PC-3 (cell line): ENCODE measurements at regions of chr2 and their contacts with region 1.

Region 1: DNA sequence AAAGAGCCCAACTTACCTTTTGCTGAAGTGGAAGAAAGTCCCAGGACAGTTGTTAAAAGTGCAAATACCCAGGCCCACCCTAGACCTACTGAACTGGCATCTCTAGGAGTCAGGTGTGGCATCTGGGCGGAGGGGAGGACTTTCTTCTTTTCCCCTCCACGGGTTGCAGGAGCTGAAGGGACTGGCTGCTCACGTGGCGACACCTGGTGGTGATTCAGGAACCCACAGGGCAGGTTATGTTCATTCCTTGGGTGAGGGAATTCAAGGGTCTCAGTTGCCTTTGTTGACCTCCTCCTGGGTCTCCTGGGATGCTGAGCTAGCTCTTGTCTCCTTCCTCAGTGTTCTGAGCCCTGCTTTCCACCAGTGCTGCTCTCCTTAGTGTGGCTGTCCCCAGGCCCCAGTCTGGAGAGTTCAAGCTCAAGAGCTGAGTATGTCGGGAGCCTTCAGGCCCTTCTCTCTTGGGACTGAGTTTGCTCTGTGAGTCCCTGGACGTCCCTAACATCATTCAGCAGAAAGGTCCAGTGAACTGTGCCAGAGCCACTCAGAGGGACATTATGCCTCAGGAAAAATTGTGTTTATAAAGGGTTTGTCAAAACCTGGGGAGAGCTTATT is 56.9 kb downstream of the DYSF start:
- DNase-seq: peak; percentile 73
- ATAC-seq: peak; percentile 90
- H3K4me3 ChIP-seq: no peak overlapping the region
- H3K27ac ChIP-seq: no peak overlapping the region
- H3K4me1 ChIP-seq: no peaks in the 10 kb centered on the region
- H3K27me3 ChIP-seq: no peaks in the 10 kb centered on the region
- CTCF ChIP-seq: peak; percentile 95

Region 2: DNA sequence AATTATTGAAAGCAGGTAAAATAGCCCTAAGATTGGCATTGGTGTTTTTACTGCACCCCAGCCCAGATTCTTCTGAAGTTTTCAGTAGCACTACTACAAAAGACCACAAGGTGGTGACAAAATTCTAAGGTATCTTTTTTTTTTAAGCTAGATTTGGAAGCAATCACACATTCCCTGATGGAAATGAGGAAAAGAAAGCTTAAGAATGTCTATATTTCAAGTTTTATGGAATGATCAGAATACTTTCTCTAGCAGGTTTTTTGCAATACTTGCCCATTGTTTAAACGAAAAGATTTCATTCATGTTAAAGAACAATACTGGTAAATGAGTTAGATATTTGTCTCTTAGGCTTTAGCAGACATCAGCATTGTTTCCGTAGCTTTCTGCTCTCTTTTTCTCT is 210.8 kb before region 1 on chr2:
- CTCF ChIA-PET with region 1: interaction called, 23 read pairs
- POLR2A ChIA-PET with region 1: interaction called, 3 read pairs
- intact Hi-C with region 1: loop called (anchors 1 kb)
- DNase-seq: peak; percentile 71
- ATAC-seq: no peak
- H3K4me3 ChIP-seq: no peak overlapping the region
- H3K27ac ChIP-seq: no peak overlapping the region
- H3K4me1 ChIP-seq: no peaks in the 10 kb centered on the region
- H3K27me3 ChIP-seq: no peaks in the 10 kb centered on the region
- CTCF ChIP-seq: peak; percentile 79

Region 3: GRCh38 chr2:71452565-71452964 is 57.7 kb before region 1 on chr2:
- CTCF ChIA-PET with region 1: no interaction called
- POLR2A ChIA-PET with region 1: no interaction called
- intact Hi-C with region 1: loop called (anchors 2 kb)
- DNase-seq: peak; percentile 91
- ATAC-seq: peak; percentile 84
- H3K4me3 ChIP-seq: peak overlapping the region; percentile 70
- H3K27ac ChIP-seq: 0 out of 2 replicates have a peak overlapping the region, but pooled peaks have one; percentile 6
- H3K4me1 ChIP-seq: peaks cover 29% of the 10 kb centered on the region
- H3K27me3 ChIP-seq: no peaks in the 10 kb centered on the region
- CTCF ChIP-seq: peak; percentile 54

Region 4: DNA sequence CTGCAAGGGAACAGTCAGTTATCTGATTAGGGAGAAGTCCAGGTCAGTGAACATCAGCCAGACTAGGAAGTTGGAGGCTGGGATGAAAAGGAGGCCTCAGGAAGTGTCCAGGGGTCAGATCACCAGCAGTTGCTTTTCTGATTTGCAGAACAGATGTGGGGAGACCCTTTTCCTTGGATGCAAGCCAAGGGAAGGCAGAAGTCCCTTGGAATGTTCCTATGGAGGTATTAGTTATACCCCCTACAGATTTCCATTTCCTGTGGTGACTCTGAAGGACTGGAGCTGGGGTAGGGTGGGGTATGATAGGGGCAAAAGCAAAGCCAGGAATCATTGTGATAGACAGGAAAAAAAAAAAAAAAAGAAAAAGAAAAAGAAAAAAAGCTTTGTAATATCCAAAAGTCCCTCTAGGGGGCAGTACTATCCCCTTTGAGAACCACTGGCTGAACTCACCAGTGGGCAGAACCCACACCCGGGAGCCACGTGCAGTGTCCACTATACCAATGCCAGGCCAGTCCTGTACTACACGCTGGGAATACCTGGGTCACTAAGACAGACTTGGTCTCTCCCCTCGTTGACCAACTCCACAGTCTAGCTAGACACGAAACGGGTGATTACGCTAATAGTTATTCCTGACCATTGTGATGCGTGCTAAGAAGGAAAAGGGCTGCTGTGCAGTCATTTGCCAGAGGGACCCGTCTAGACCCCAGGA is 49.6 kb before region 1 on chr2:
- CTCF ChIA-PET with region 1: interaction called, 6 read pairs
- POLR2A ChIA-PET with region 1: no interaction called
- intact Hi-C with region 1: loop called (anchors 1 kb)
- DNase-seq: peak; percentile 48
- ATAC-seq: peak; percentile 33; the same call in 1 of the 2 replicates
- H3K4me3 ChIP-seq: no peak overlapping the region
- H3K27ac ChIP-seq: no peak overlapping the region
- H3K4me1 ChIP-seq: peaks cover 11% of the 10 kb centered on the region; the same call in 1 of the 2 replicates
- H3K27me3 ChIP-seq: no peaks in the 10 kb centered on the region
- CTCF ChIP-seq: peak; percentile 66